Mucosa of descending colon (tissue), 3 donors: ENCODE measurements at regions of chr6 and their contacts with region 1.

Region 1: GRCh38 chr6:7389451-7390225 is at the starts of genes CAGE1 and RIOK1:
- DNase-seq: peak; percentile 96 to 98 (median 97)
- ATAC-seq: peak; percentile 99
- H3K4me3 ChIP-seq: peak within 1 kb of the TSS; percentile 54
- H3K4me1 ChIP-seq: peaks cover 19% of the 10 kb centered on the region
- CTCF ChIP-seq: no peak
- total RNA-seq, gene CAGE1: 0.09 TPM in 1 of 3 donors, not detected in the others
- total RNA-seq, gene RIOK1: 12.1 to 19.8 (median 15.0) TPM

Region 2: GRCh38 chr6:7166410-7167305 is 223.0 kb before region 1 on chr6:
- intact Hi-C with region 1: no loop called
- DNase-seq: peak in 2 of 3 donors; percentile 55 to 70
- ATAC-seq: peak; percentile 57
- H3K4me3 ChIP-seq: no peak overlapping the region
- H3K4me1 ChIP-seq: peaks cover 79% of the 10 kb centered on the region
- CTCF ChIP-seq: no peak

Region 3: GRCh38 chr6:7300926-7301325 is 88.7 kb before region 1 on chr6:
- intact Hi-C with region 1: loop called in 1 of 2 experiments (anchors 10 kb)
- DNase-seq: no peak
- ATAC-seq: no peak
- H3K4me3 ChIP-seq: no peak overlapping the region
- H3K4me1 ChIP-seq: no peaks in the 10 kb centered on the region
- CTCF ChIP-seq: no peak